Naive thymus-derived CD4-positive, alpha-beta T cell (primary cell): ENCODE measurements at regions of chr10 and their contacts with region 1.

Region 1: GRCh38 chr10:38010119-38010903 is at the start of gene ZNF33A:
- DNase-seq: peak in 8 of 9 donors; percentile 80 to 96 (median 94)
- ATAC-seq: peak; percentile 88
- H3K4me3 ChIP-seq: peak within 1 kb of the TSS; percentile 94
- H3K4me3 Mint-ChIP-seq: peak within 1 kb of the TSS; percentile 85 to 96 (median 91)
- H3K27ac ChIP-seq: peak within 1 kb of the TSS; percentile 96
- H3K27ac Mint-ChIP-seq: peak within 1 kb of the TSS; percentile 95 to 100 (median 98)
- H3K4me1 ChIP-seq: peaks cover 14% of the 10 kb centered on the region in 2 donors
- H3K4me1 Mint-ChIP-seq: peaks cover 11 to 51% (median 37%) of the 10 kb centered on the region in 7 donors
- H3K27me3 ChIP-seq: no peaks in the 10 kb centered on the region
- H3K27me3 Mint-ChIP-seq: no peaks in the 10 kb centered on the region
- total RNA-seq, gene ZNF33A: 36.5 to 74.2 (median 46.3) TPM

Region 2: DNA sequence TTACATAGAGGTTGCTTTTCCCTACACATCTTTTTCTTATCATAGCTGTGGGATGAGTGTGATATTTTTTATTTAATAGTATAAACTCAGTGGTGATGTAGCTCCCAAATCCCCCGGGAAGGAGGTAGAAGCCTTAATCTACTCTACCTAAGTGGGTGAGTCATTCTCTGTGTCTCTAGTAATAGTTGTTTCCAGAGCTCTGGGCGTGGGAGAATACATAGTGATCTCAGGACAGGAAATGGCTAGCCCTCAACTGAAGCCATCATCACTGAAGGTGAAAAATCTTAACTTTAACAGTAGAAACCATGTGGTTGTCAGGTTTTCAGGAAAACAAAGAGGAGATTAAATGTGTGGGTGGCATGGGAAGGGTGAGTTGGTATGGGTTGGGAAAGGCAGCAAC is 606.5 kb before region 1 on chr10:
- CTCF ChIA-PET with region 1: no interaction called
- POLR2A ChIA-PET with region 1: no interaction called
- intact Hi-C with region 1: no loop called
- DNase-seq: no peak
- ATAC-seq: no peak
- H3K4me3 ChIP-seq: no peak overlapping the region
- H3K4me3 Mint-ChIP-seq: no peak overlapping the region
- H3K27ac ChIP-seq: no peak overlapping the region
- H3K27ac Mint-ChIP-seq: no peak overlapping the region
- H3K4me1 ChIP-seq: no peaks in the 10 kb centered on the region
- H3K4me1 Mint-ChIP-seq: no peaks in the 10 kb centered on the region
- H3K27me3 ChIP-seq: no peaks in the 10 kb centered on the region
- H3K27me3 Mint-ChIP-seq: no peaks in the 10 kb centered on the region

Region 3: DNA sequence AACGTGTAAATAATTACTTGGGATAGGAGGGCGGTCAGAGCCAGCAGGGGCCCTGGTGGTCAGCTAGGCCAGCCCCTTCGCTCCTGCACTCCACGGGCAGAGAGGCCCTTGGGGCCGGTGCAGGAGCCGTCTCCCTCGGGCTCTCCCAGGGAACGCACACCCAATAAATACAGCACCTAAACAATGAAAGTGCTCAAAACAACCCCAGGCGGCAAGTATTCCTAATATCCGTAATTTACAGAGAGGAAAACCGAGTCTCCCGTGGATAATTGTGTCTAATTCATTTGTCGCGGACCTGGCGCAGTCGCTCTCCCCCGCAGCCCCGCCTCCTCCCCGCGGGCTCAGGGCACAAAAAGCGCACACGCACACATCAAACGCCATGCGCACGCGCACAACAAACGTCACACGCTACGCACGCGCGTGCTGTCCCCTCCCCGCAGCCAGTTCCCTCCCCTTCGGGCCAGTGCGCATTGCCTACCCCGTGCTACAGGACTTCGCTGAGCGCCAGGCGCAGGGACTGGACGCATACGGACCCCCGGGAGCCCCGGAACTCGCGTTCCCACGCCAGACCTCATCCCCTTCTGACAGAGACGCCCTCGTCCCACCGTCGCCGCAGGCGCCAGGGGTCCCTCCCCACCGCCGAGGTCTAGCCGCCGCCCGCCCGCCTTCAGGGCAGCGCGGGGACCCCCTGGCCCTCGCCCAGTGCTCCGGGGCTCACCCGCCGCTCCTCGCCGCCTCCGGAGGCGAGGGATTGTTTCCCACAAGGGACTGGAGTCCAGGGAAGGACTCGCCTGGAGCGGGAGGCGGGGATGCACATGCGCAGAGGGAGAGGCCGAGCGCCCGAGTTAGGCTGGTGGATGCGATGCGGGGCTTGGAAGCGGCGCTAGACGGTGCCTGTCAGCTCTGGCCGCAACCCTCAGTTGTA is 152.8 kb before region 1 on chr10 and contains the start of gene ZNF248:
- CTCF ChIA-PET with region 1: no interaction called
- POLR2A ChIA-PET with region 1: interaction called, 5 read pairs
- intact Hi-C with region 1: loop called (anchors 1 kb)
- DNase-seq: peak; percentile 91 to 95 (median 94)
- ATAC-seq: peak; percentile 98
- H3K4me3 ChIP-seq: peak within 1 kb of the TSS; percentile 93
- H3K4me3 Mint-ChIP-seq: peak within 1 kb of the TSS; percentile 89 to 98 (median 94)
- H3K27ac ChIP-seq: peak within 1 kb of the TSS; percentile 96
- H3K27ac Mint-ChIP-seq: peak within 1 kb of the TSS; percentile 86 to 99 (median 98)
- H3K4me1 ChIP-seq: peaks cover 9 to 23% of the 10 kb centered on the region in 2 donors
- H3K4me1 Mint-ChIP-seq: peaks cover 30 to 53% (median 45%) of the 10 kb centered on the region in 7 donors
- H3K27me3 ChIP-seq: no peaks in the 10 kb centered on the region
- H3K27me3 Mint-ChIP-seq: peaks cover 0 to 2% (median 0%) of the 10 kb centered on the region in 5 donors
- total RNA-seq, gene ZNF248: 5.4 to 26.9 (median 11.0) TPM

Region 4: DNA sequence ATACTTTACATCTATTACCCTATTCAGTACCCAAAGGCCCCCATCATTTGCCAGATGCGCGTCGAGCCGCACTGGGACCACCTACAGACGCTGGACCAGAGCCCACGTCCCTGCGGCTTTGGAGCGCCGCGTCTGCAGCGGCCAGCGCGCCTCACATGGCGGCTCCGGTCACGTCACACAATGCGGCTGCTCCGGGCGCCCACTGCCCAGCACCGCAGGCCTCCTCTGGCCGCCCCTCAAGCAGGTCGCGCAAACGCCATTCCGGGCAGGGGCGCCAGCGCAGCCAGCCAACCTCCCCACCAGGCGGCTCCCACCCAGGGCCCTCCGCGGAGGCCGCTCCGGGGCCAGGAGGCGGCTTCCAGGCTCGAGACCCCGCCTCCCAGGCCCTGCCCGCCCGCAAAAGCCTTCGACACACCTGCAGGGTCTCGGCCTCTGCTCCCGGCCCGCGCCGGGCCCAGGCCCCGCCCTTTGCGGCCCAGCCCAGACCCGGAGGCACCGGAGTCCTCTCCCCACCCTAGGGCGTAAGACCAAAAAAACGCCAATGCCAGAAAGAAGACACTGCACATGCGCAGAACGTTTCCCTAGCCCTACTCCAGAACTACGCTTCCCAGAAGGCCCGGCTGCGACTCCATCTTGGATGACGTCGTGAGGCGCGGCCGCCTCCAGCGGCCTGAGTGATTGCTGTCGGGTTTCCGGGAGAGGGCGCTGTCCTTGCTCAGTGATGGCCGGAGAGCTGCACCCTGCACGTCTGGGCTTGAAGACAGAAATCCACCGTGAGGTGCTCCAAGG is 34.0 kb before region 1 on chr10 and contains the start of gene ZNF25:
- CTCF ChIA-PET with region 1: interaction called, 5 read pairs
- POLR2A ChIA-PET with region 1: interaction called, 22 read pairs
- intact Hi-C with region 1: loop called (anchors 1 kb)
- DNase-seq: peak; percentile 83 to 97 (median 96)
- ATAC-seq: peak; percentile 94
- H3K4me3 ChIP-seq: peak within 1 kb of the TSS; percentile 62
- H3K4me3 Mint-ChIP-seq: peak within 1 kb of the TSS; percentile 87 to 100 (median 95)
- H3K27ac ChIP-seq: peak within 1 kb of the TSS; percentile 95
- H3K27ac Mint-ChIP-seq: peak within 1 kb of the TSS; percentile 92 to 99 (median 97)
- H3K4me1 ChIP-seq: peaks cover 6 to 10% of the 10 kb centered on the region in 2 donors
- H3K4me1 Mint-ChIP-seq: peaks cover 19 to 36% (median 27%) of the 10 kb centered on the region in 7 donors
- H3K27me3 ChIP-seq: no peaks in the 10 kb centered on the region
- H3K27me3 Mint-ChIP-seq: peaks cover 0 to 2% (median 0%) of the 10 kb centered on the region in 5 donors
- total RNA-seq, gene ZNF25: 7.0 to 13.9 (median 10.1) TPM

Region 5: GRCh38 chr10:37992083-37992482 is 18.2 kb before region 1 on chr10:
- CTCF ChIA-PET with region 1: no interaction called
- POLR2A ChIA-PET with region 1: no interaction called
- intact Hi-C with region 1: no loop called
- DNase-seq: no peak
- ATAC-seq: no peak
- H3K4me3 ChIP-seq: no peak overlapping the region
- H3K4me3 Mint-ChIP-seq: no peak overlapping the region
- H3K27ac ChIP-seq: no peak overlapping the region
- H3K27ac Mint-ChIP-seq: no peak overlapping the region
- H3K4me1 ChIP-seq: no peaks in the 10 kb centered on the region
- H3K4me1 Mint-ChIP-seq: no peaks in the 10 kb centered on the region
- H3K27me3 ChIP-seq: no peaks in the 10 kb centered on the region
- H3K27me3 Mint-ChIP-seq: peaks cover 0 to 15% (median 0%) of the 10 kb centered on the region in 5 donors

Region 6: DNA sequence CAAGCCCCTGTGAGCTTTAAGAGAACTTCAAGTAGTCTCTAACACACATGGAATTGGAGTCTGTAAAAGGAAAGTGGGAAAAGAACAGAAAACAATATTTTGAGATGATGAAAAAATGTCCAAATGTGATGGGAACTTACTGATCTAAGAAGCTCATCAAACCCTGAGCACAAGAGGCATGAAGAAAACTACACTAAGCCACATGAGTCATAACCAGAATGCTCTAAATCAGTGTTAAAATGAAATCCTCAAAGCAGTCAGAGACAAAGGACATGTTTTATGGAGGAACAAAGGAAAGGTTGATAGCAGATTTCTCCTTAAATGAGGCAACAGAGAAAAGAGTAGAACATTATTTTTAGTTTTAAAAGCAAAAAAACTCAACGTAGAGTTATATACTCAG is 37.4 kb after region 1 on chr10:
- CTCF ChIA-PET with region 1: no interaction called
- POLR2A ChIA-PET with region 1: interaction called, 4 read pairs
- intact Hi-C with region 1: loop called in 1 of 2 experiments (anchors 5 kb)
- DNase-seq: no peak
- ATAC-seq: no peak
- H3K4me3 ChIP-seq: no peak overlapping the region
- H3K4me3 Mint-ChIP-seq: no peak overlapping the region
- H3K27ac ChIP-seq: no peak overlapping the region
- H3K27ac Mint-ChIP-seq: no peak overlapping the region
- H3K4me1 ChIP-seq: no peaks in the 10 kb centered on the region
- H3K4me1 Mint-ChIP-seq: peaks cover 13 to 32% (median 23%) of the 10 kb centered on the region in 7 donors
- H3K27me3 ChIP-seq: no peaks in the 10 kb centered on the region
- H3K27me3 Mint-ChIP-seq: no peaks in the 10 kb centered on the region